A549 (cell line): ENCODE measurements at regions of chr1 and their contacts with region 1.

Region 1: GRCh38 chr1:21255278-21255942 is 34.9 kb downstream of the ECE1 start:
- DNase-seq: peak; percentile 55 to 85
- ATAC-seq: peak; percentile 92 to 96
- H3K4me3 ChIP-seq: no peak overlapping the region
- H3K27ac ChIP-seq: peak overlapping the region; percentile 44 to 56; a peak in 5 of 6 replicates
- H3K4me1 ChIP-seq: peaks cover 29% of the 10 kb centered on the region
- CTCF ChIP-seq: peak; percentile 74
- EP300 ChIP-seq: no peak
- POLR2A ChIP-seq: no peak
- RAD21 ChIP-seq: peak; percentile 91 to 96

Region 2: GRCh38 chr1:21232044-21232443 is 23.4 kb before region 1 on chr1:
- CTCF ChIA-PET with region 1: interaction called, 101 read pairs
- POLR2A ChIA-PET with region 1: no interaction called
- DNase-seq: peak; percentile 35 to 63
- ATAC-seq: peak; percentile 84 to 88
- H3K4me3 ChIP-seq: no peak overlapping the region
- H3K27ac ChIP-seq: no peak overlapping the region
- H3K4me1 ChIP-seq: 0 out of 3 replicates have a peak, but pooled peaks cover 3% of the 10 kb centered on the region
- CTCF ChIP-seq: peak; percentile 75
- EP300 ChIP-seq: no peak
- POLR2A ChIP-seq: no peak
- RAD21 ChIP-seq: peak; percentile 80 to 85

Region 3: GRCh38 chr1:21280011-21280471 is 24.6 kb after region 1 on chr1:
- CTCF ChIA-PET with region 1: interaction called, 13 read pairs
- POLR2A ChIA-PET with region 1: no interaction called
- DNase-seq: no peak
- ATAC-seq: no peak
- H3K4me3 ChIP-seq: no peak overlapping the region
- H3K27ac ChIP-seq: peak overlapping the region; percentile 50 to 66; a peak in 5 of 6 replicates
- H3K4me1 ChIP-seq: peaks cover 38% of the 10 kb centered on the region
- CTCF ChIP-seq: no peak
- EP300 ChIP-seq: no peak
- POLR2A ChIP-seq: no peak
- RAD21 ChIP-seq: no peak

Region 4: GRCh38 chr1:21302747-21303715 is 47.6 kb after region 1 on chr1:
- CTCF ChIA-PET with region 1: interaction called, 19 read pairs
- POLR2A ChIA-PET with region 1: no interaction called
- DNase-seq: no peak
- ATAC-seq: peak; percentile 71 to 72; a peak in 5 of 6 replicates
- H3K4me3 ChIP-seq: no peak overlapping the region
- H3K27ac ChIP-seq: peak overlapping the region; percentile 53 to 72; a peak in 5 of 6 replicates
- H3K4me1 ChIP-seq: peaks cover 23% of the 10 kb centered on the region
- CTCF ChIP-seq: peak; percentile 29; the same call in 2 of the 3 replicates
- EP300 ChIP-seq: no peak
- POLR2A ChIP-seq: no peak
- RAD21 ChIP-seq: peak; percentile 46 to 60; a peak in 4 of 5 replicates

Region 5: DNA sequence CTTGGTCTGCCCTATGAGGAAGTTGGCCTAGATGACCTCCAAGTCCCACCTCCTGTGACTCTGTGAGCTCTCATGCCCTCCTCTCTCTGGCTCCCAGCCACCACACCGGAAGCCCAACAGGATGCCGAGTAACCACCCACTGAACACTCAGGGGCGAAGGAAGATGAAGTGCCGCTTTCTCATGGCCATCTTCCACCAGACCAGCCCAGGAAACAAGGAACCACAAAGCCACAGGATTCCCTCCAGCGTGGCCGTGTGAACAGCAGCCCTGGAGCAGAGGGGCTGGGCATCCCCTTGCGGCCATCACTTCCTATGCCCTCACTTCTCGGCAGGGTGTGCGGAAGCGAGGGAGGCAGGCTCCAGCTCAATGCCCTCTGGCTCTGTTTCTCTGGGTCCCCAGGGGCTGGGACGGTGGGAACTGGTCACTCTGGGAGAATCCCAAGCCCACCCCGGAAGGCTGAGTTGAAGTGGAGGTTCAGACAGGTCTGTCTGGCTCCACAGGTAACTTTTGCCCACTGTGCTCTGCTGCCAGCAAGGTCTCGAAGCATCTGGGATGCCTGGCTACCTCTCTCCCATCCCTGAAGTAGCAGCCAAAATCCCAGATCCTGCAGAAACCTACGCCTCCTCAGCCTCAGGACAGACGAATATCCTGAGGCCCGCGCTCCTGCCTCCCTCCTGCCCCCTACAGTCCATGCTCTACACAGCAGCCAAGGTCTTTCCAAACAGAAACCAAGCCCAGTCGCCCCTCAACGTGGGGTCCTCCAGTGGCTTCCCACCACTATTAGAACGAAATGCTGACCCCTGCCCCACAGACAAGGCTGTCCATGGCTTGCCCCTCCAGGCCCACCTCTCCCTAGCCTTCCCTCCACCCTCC is 79.0 kb after region 1 on chr1:
- CTCF ChIA-PET with region 1: interaction called, 49 read pairs
- POLR2A ChIA-PET with region 1: no interaction called
- DNase-seq: peak; percentile 41 to 65
- ATAC-seq: peak; percentile 81 to 84
- H3K4me3 ChIP-seq: 0 out of 3 replicates have a peak overlapping the region, but pooled peaks have one; percentile 9
- H3K27ac ChIP-seq: peak overlapping the region; percentile 89 to 90
- H3K4me1 ChIP-seq: peaks cover 93% of the 10 kb centered on the region
- CTCF ChIP-seq: peak; percentile 60
- EP300 ChIP-seq: no peak
- POLR2A ChIP-seq: no peak
- RAD21 ChIP-seq: peak; percentile 68

Region 6: DNA sequence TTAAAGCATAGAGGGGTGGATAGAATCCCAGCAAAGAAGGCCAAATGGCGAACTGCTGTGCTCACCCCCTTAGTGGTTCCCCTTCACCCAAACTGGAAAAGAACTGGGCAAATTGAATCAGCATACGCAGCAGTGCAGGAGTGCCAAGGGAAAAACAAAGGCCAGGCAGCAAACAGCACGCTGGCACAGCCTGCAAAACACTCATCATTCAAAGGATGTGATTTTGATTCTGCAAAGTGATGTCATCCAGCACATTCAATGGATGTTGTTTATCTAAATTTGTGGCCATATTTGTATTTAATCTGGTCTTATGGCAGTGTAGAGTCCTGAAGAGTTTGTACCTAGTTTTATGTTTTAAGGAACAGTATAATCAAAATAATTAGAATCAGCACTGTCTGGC is 106.7 kb after region 1 on chr1:
- CTCF ChIA-PET with region 1: interaction called, 253 read pairs
- POLR2A ChIA-PET with region 1: no interaction called
- DNase-seq: no peak
- ATAC-seq: no peak
- H3K4me3 ChIP-seq: no peak overlapping the region
- H3K27ac ChIP-seq: no peak overlapping the region; a peak in 1 of 6 replicates
- H3K4me1 ChIP-seq: no peaks in the 10 kb centered on the region
- CTCF ChIP-seq: no peak
- EP300 ChIP-seq: no peak
- POLR2A ChIP-seq: no peak
- RAD21 ChIP-seq: no peak